Heart left ventricle (tissue), 16 donors: ENCODE measurements at regions of chrX and their contacts with region 1.

Region 1: GRCh38 chrX:13212191-13212651 is 107.6 kb downstream of the ATXN3L start:
- DNase-seq: no peak
- ATAC-seq: peak; percentile 26 to 77 (median 62)
- H3K4me3 ChIP-seq: no peak overlapping the region
- H3K27ac ChIP-seq: peak overlapping the region in 10 of 12 donors; percentile 0 to 57 (median 34)
- H3K4me1 ChIP-seq: peaks cover 0 to 26% (median 3%) of the 10 kb centered on the region in 12 donors
- H3K27me3 ChIP-seq: no peaks in the 10 kb centered on the region
- CTCF ChIP-seq: no peak
- POLR2A ChIP-seq: no peak

Region 2: GRCh38 chrX:13036896-13037295 is 175.3 kb before region 1 on chrX:
- intact Hi-C with region 1: loop called in 1 of 10 experiments (anchors 5 kb)
- DNase-seq: no peak
- ATAC-seq: no peak
- H3K4me3 ChIP-seq: no peak overlapping the region
- H3K27ac ChIP-seq: no peak overlapping the region
- H3K4me1 ChIP-seq: peaks cover 0 to 9% (median 0%) of the 10 kb centered on the region in 12 donors
- H3K27me3 ChIP-seq: no peaks in the 10 kb centered on the region
- CTCF ChIP-seq: no peak
- POLR2A ChIP-seq: no peak

Region 3: GRCh38 chrX:13151828-13152510 is 60.3 kb before region 1 on chrX:
- intact Hi-C with region 1: loop called in 1 of 10 experiments (anchors 10 kb)
- DNase-seq: peak in 1 of 5 donors; percentile 8
- ATAC-seq: peak in 3 of 4 donors; percentile 72 to 83 (median 82)
- H3K4me3 ChIP-seq: peak overlapping the region in 5 of 12 donors; percentile 10 to 26 (median 15)
- H3K27ac ChIP-seq: peak overlapping the region in 11 of 12 donors; percentile 4 to 80 (median 59)
- H3K4me1 ChIP-seq: peaks cover 0 to 12% (median 0%) of the 10 kb centered on the region in 12 donors
- H3K27me3 ChIP-seq: no peaks in the 10 kb centered on the region
- CTCF ChIP-seq: no peak
- POLR2A ChIP-seq: no peak

Region 4: DNA sequence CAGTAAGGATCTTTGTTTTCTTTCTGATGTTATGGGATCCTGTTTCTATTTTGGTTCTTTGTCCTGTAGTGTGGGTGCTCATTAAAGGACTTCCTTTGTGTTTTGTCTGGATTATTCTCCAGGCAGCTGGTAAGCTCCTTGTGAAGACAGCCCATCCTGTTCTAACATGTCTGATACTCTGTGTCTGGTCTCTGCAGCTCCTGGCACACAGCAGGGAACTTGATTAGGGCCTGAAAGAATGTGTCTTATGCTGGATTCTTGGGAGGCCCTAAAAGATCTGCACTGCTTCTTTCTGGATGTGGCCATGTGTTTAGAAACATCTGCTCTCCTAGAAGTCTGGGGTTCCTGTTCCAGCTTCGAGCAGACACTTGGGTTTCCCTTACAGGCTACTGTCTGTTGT is 145.7 kb after region 1 on chrX:
- intact Hi-C with region 1: no loop called
- DNase-seq: no peak
- ATAC-seq: peak in 3 of 4 donors; percentile 40 to 74 (median 51)
- H3K4me3 ChIP-seq: no peak overlapping the region
- H3K27ac ChIP-seq: peak overlapping the region in 5 of 12 donors; percentile 8 to 45 (median 39)
- H3K4me1 ChIP-seq: peaks cover 0 to 14% (median 5%) of the 10 kb centered on the region in 12 donors
- H3K27me3 ChIP-seq: peaks cover 0 to 8% (median 0%) of the 10 kb centered on the region in 9 donors
- CTCF ChIP-seq: no peak
- POLR2A ChIP-seq: no peak